PC-3 (cell line): ENCODE measurements at regions of chr7 and their contacts with region 1.

Region 1: DNA sequence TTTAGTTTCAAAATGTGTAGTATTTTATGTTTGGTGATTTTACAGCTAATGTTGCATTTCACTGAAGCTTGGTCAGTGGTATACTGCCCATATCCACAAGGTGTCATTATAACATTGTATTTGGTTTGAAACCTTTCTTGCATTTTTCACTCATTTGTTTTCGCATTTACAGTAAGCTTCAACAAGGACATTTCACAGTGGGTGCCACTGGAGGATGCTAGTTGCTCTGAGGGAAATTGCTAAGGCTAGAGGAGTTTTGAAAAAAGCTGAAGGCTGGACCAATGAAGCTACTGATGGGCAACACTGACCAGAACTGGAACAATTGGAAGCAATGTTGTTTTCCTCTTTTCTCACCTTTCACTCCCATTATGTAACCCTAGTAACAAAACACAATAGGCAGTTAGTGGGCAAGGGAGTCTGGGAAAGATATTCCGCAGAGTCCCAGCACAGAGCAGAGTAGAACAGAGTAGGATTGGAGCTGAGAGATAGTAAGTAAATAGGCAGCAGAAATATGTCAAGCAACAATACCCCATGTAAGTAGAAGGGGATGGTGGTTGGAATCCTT is 23.6 kb upstream of the SRI start:
- DNase-seq: peak; percentile 82
- ATAC-seq: peak; percentile 97
- H3K4me3 ChIP-seq: no peak overlapping the region
- H3K27ac ChIP-seq: no peak overlapping the region
- H3K4me1 ChIP-seq: peaks cover 2% of the 10 kb centered on the region; the same call in 1 of the 2 replicates
- H3K27me3 ChIP-seq: no peaks in the 10 kb centered on the region
- CTCF ChIP-seq: peak; percentile 95

Region 2: GRCh38 chr7:88151119-88151790 is 92.2 kb before region 1 on chr7:
- CTCF ChIA-PET with region 1: no interaction called
- POLR2A ChIA-PET with region 1: no interaction called
- intact Hi-C with region 1: no loop called
- DNase-seq: no peak
- ATAC-seq: no peak
- H3K4me3 ChIP-seq: no peak overlapping the region
- H3K27ac ChIP-seq: no peak overlapping the region
- H3K4me1 ChIP-seq: no peaks in the 10 kb centered on the region
- H3K27me3 ChIP-seq: no peaks in the 10 kb centered on the region
- CTCF ChIP-seq: no peak

Region 3: DNA sequence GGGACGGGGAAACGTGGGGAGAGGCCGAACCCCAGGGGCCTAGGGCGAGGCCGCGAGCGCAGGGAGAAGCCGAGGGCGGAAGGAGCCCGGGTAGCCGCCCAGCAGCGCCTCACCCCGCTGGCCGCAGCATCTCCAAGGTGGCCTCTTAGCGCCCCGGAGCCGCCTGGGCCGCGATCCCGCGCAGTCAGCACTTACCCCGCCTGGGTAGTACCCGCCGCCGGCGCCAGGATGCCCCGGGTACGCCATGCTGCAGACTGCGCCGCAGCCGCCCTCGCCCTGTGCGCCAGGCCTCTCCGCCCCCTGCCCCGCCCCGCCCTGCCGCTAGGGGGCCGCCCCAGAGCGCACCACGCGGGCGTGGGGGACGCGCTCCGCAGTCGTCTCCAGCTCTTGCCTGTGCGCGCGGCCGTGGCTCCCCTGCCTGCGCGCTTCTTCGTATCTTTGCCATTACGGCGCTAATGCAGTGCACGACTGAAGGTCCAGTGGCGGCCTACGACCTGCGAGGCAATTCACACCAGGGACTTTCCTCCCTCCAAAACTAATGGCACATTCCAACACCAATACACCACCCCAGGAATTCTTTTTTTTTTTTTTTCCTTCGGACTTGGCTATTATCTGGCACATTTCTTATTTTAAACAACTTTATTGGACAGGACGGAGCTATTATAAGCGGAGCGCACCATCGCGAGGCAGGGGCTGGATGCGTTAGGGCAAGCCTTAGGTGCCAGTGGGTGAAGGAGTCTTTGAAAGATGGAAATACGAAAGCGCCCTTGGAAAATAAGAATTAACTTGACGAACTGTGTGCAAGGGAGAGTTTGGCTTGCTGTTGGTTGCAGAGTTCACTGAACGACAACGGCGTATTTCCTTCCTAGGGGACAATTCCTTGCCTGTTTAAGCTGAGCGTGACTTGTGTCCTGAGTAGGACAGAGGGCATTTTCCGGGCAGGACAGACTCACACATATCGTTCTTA is 23.4 kb before region 1 on chr7 and contains the start of gene SRI:
- CTCF ChIA-PET with region 1: interaction called, 7 read pairs
- POLR2A ChIA-PET with region 1: no interaction called
- intact Hi-C with region 1: loop called (anchors 1 kb)
- DNase-seq: peak; percentile 78
- ATAC-seq: peak; percentile 86
- H3K4me3 ChIP-seq: peak within 1 kb of the TSS; percentile 92
- H3K27ac ChIP-seq: peak within 1 kb of the TSS; percentile 92
- H3K4me1 ChIP-seq: peaks cover 30% of the 10 kb centered on the region
- H3K27me3 ChIP-seq: no peaks in the 10 kb centered on the region
- CTCF ChIP-seq: peak; percentile 44
- total RNA-seq, gene SRI: 94.0 and 151 TPM in 2 replicates

Region 4: GRCh38 chr7:88281715-88282114 is 38.3 kb after region 1 on chr7:
- CTCF ChIA-PET with region 1: interaction called, 3 read pairs
- POLR2A ChIA-PET with region 1: no interaction called
- intact Hi-C with region 1: loop called (anchors 1 kb)
- DNase-seq: peak; percentile 64
- ATAC-seq: peak; percentile 94
- H3K4me3 ChIP-seq: no peak overlapping the region
- H3K27ac ChIP-seq: peak overlapping the region; percentile 81
- H3K4me1 ChIP-seq: peaks cover 16% of the 10 kb centered on the region
- H3K27me3 ChIP-seq: no peaks in the 10 kb centered on the region
- CTCF ChIP-seq: no peak

Region 5: DNA sequence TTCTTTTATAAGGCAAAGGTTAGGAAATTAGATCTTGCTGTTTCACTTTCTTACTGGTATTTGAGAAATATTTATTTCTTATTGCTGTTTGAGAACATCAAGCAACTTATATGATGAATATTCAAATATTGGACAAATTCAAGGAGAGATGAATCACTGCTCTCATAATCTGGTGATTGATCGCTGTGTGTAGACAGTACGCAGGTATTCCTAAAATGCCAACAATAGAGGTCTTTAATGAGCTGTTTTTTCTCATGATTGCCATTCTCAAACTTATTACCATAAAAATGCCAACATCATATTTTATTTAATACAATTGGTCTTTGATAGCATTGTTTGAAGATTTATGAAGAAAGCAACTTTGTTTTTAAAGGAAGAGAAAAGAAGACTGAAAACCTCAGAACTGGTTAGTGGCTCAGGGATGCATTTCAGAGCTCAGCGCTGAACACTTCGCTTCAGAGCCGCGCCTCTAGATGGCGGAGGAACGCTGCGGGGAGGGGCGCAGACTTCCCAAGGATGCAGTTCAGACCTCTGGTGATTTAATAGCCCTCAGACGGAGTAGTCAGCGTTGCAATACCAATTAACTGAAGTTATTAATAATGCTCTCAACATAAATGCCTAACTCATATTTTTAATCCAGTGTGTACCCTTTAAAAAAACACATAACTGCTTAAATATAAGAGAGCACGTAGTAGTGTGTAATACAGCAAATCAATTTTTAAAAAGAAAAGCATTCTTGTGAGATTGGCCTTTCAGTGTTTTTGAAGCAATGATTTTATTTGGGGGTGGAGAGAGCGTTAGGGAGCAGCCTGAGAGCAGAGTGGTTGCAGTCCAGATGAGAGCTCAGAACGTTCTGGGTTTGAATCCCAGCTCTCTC is 101.8 kb after region 1 on chr7:
- CTCF ChIA-PET with region 1: interaction called, 12 read pairs
- POLR2A ChIA-PET with region 1: no interaction called
- intact Hi-C with region 1: no loop called
- DNase-seq: peak; percentile 54
- ATAC-seq: peak; percentile 99
- H3K4me3 ChIP-seq: peak overlapping the region; percentile 32; the same call in 1 of the 2 replicates
- H3K27ac ChIP-seq: no peak overlapping the region
- H3K4me1 ChIP-seq: no peaks in the 10 kb centered on the region
- H3K27me3 ChIP-seq: no peaks in the 10 kb centered on the region
- CTCF ChIP-seq: peak; percentile 64

Region 6: GRCh38 chr7:88546808-88547207 is 303.4 kb after region 1 on chr7:
- CTCF ChIA-PET with region 1: interaction called, 5 read pairs
- POLR2A ChIA-PET with region 1: no interaction called
- intact Hi-C with region 1: loop called (anchors 1 kb)
- DNase-seq: peak; percentile 62
- ATAC-seq: peak; percentile 82
- H3K4me3 ChIP-seq: no peak overlapping the region
- H3K27ac ChIP-seq: no peak overlapping the region
- H3K4me1 ChIP-seq: no peaks in the 10 kb centered on the region
- H3K27me3 ChIP-seq: no peaks in the 10 kb centered on the region
- CTCF ChIP-seq: peak; percentile 68

Region 7: GRCh38 chr7:88835147-88835728 is 591.8 kb after region 1 on chr7:
- CTCF ChIA-PET with region 1: interaction called, 6 read pairs
- POLR2A ChIA-PET with region 1: no interaction called
- intact Hi-C with region 1: loop called (anchors 5 kb)
- DNase-seq: peak; percentile 57
- ATAC-seq: peak; percentile 54
- H3K4me3 ChIP-seq: no peak overlapping the region
- H3K27ac ChIP-seq: no peak overlapping the region
- H3K4me1 ChIP-seq: no peaks in the 10 kb centered on the region
- H3K27me3 ChIP-seq: no peaks in the 10 kb centered on the region
- CTCF ChIP-seq: peak; percentile 56